Posterior cingulate gyrus (tissue), 11 donors: ENCODE measurements at regions of chr1 and their contacts with region 1.

Region 1: DNA sequence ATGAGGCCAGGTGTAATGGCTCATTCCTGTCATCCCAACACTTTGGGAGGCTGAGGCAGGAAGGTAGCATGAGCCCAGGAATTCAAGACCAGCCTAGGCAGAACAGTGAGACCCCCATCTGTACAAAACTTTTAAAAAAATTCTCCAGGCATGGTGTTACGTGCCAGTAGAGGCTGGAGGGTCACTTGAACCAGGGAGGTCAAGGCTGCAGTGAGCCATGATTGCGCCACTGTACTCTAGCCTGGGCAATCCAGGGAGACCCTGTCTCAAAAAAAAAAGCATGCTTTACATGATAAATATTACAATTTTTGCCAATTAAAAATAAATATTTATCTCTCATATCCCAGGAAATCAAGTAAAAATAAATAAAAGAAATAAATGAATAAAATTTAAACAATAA is 17.6 kb upstream of the VPS45 start:
- DNase-seq: no peak

Region 2: GRCh38 chr1:150010393-150011115 is 39.4 kb before region 1 on chr1 and contains the start of gene OTUD7B:
- intact Hi-C with region 1: loop called (anchors 5 kb)
- DNase-seq: peak; percentile 82 to 98 (median 88)

Region 3: DNA sequence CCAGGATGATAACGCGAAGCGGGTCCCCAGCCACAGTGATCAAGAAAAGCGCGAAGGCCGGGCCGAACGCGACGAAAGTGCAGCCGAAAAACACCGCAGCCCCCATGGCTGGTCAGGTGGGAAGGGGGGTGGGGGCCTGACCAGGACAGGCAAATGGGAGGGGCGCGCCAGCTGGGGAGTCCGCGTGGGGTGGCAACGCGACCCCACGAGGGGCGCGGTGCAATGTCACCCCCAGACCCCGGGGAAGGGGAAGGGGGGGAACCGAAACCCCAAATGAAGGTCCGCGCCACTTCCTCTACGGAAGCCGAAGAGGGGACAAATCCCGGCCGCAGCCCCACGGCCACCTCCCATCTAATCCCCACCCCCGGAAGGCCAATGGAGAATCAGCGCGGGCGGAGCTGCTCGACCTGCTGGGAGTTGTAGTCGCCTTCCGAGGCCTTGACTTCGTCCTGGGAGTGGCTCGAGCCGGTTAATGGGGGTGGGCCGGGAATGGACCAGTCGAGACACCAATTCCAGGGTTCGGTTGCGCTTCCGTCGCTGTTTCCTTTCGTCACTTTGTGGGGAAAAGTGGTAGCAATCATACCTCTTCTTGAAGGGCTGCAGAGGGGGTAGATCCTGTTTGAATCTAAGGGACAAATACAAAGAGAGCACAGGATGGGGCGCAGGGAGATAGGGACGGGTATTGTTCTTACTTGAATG is 218.9 kb after region 1 on chr1 and contains the start of gene APH1A:
- intact Hi-C with region 1: no loop called
- DNase-seq: peak; percentile 95 to 100 (median 98)